MCF 10A (cell line): ENCODE measurements at regions of chr4 and their contacts with region 1.

Region 1: DNA sequence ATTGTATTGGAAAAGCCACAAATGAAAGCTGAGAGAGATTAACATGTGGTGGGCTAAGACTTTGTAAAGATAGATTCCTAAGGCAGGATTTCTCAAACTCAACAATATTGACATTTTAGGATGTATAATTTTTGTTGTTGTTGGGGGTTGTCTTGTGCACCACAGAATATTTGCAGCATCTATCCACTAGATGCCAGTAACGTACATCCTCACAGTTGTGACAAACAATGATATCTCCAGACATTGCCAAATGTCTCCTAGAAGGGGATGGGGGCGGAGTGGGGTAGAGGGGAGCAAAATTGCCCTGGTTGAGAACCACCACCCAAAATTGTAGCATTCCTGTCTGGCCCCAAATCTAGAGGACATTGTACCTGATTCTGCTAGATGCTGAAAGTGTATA is 14.7 kb upstream of the CBR4 start:
- DNase-seq: peak; percentile 51
- H3K4me3 Mint-ChIP-seq: no peak overlapping the region
- H3K27ac Mint-ChIP-seq: no peak overlapping the region
- H3K4me1 Mint-ChIP-seq: no peaks in the 10 kb centered on the region
- H3K27me3 Mint-ChIP-seq: no peaks in the 10 kb centered on the region
- CTCF ChIP-seq: peak; percentile 68

Region 2: DNA sequence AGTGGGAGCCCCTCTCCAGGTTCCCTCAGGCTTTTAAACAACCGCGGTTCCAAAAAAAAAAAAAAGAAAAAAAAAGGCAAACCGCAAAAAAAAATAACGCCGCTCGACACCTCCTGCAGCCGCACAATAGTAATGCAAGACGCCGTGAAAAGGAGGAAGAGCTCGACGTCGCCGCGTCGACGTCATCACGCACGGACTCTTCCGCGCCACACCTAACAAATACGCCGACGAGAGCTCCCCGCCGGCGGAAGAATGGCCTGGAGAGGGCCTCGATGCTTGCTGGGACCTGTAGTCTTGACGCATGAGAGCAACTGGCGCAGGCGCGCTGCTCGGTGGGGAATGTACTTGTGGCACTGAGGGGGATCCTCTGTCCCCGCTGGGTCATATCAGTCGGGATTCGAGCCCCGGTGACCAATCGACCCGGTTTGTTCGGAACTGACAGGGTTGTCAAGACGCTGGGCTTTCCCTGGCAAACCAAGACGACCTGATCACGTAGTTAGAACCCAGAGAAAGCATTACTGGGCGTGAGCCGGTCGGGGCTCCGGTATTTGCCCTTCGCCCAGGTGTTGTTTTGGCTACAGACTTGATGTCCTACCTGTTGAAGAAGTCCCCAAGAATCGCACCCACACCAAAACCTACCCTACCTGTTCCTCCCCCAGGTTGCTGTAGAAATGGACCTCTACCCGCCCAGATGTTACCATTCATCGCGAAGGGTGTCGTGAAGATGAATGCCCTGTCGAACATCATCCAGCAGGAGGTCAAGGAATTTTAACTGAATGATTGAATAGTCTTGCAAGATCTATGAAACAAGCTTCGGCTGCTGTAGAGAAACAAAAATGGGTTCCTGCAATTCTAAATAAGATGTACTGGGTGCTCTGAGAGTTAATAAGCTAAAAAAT is 14.4 kb before region 1 on chr4 and contains the start of gene CBR4:
- CTCF ChIA-PET with region 1: interaction called, 25 read pairs
- POLR2A ChIA-PET with region 1: interaction called, 7 read pairs
- intact Hi-C with region 1: no loop called
- DNase-seq: peak; percentile 98
- H3K4me3 Mint-ChIP-seq: peak within 1 kb of the TSS; percentile 94
- H3K27ac Mint-ChIP-seq: peak within 1 kb of the TSS; percentile 97
- H3K4me1 Mint-ChIP-seq: peaks cover 30% of the 10 kb centered on the region
- H3K27me3 Mint-ChIP-seq: no peaks in the 10 kb centered on the region
- CTCF ChIP-seq: peak; percentile 34
- total RNA-seq, gene CBR4: 19.2 and 24.0 TPM in 2 replicates

Region 3: GRCh38 chr4:169069972-169070902 is 45.5 kb after region 1 on chr4:
- CTCF ChIA-PET with region 1: interaction called, 11 read pairs
- POLR2A ChIA-PET with region 1: no interaction called
- intact Hi-C with region 1: no loop called
- DNase-seq: peak; percentile 82
- H3K4me3 Mint-ChIP-seq: peak overlapping the region; percentile 28
- H3K27ac Mint-ChIP-seq: peak overlapping the region; percentile 96
- H3K4me1 Mint-ChIP-seq: peaks cover 17% of the 10 kb centered on the region
- H3K27me3 Mint-ChIP-seq: no peaks in the 10 kb centered on the region
- CTCF ChIP-seq: no peak

Region 4: GRCh38 chr4:169115897-169116254 is 91.1 kb after region 1 on chr4:
- CTCF ChIA-PET with region 1: interaction called, 3 read pairs
- POLR2A ChIA-PET with region 1: no interaction called
- intact Hi-C with region 1: loop called (anchors 10 kb)
- DNase-seq: peak; percentile 87
- H3K4me3 Mint-ChIP-seq: peak overlapping the region; percentile 46
- H3K27ac Mint-ChIP-seq: peak overlapping the region; percentile 77
- H3K4me1 Mint-ChIP-seq: peaks cover 10% of the 10 kb centered on the region
- H3K27me3 Mint-ChIP-seq: no peaks in the 10 kb centered on the region
- CTCF ChIP-seq: no peak

Region 5: DNA sequence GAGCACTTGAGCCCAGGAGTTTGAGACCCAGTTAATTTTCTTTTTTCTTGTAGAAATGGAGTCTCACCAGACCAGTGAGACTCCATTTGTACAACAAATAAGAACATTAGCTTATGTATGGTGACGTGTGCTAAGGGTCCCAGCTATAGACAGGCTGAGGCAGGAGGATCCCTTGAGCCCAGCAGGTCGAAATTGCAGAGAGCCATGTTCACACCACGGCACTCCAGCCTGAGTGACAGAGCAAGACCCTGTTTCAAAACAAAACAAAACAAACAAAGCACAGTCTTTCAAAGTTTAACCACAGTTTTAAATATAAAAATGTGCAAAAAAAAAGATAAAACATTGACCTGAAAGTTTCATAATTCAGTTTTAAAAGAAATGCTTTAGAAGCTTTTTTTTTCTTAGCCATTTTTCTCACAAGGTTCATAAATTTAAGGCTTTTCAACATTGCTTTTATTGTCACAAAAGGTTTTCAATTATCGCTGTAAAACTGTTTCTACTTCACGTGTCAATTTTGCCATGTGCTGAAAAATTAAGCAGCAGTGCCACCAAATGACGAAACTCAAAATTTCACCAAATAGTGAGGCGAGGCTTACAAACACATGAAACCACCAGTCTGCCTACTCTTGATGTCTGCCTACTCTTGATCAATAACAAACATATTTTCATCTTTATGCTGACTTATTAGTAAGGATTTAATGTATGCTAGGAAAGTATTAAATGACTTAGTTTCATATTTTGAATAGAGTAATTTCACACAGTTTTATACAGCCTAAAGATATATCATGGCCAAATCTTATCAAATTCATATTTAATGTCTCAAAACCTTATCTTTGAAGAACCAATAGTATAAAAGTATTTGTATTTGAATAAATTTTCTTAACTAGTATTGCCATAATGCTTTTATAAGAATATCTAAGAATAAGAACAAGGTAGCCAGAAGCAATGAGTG is 461.3 kb after region 1 on chr4:
- CTCF ChIA-PET with region 1: interaction called, 32 read pairs
- POLR2A ChIA-PET with region 1: no interaction called
- intact Hi-C with region 1: loop called (anchors 1 kb)
- DNase-seq: peak; percentile 66
- H3K4me3 Mint-ChIP-seq: no peak overlapping the region
- H3K27ac Mint-ChIP-seq: peak overlapping the region; percentile 15
- H3K4me1 Mint-ChIP-seq: no peaks in the 10 kb centered on the region
- H3K27me3 Mint-ChIP-seq: no peaks in the 10 kb centered on the region
- CTCF ChIP-seq: peak; percentile 51

Region 6: DNA sequence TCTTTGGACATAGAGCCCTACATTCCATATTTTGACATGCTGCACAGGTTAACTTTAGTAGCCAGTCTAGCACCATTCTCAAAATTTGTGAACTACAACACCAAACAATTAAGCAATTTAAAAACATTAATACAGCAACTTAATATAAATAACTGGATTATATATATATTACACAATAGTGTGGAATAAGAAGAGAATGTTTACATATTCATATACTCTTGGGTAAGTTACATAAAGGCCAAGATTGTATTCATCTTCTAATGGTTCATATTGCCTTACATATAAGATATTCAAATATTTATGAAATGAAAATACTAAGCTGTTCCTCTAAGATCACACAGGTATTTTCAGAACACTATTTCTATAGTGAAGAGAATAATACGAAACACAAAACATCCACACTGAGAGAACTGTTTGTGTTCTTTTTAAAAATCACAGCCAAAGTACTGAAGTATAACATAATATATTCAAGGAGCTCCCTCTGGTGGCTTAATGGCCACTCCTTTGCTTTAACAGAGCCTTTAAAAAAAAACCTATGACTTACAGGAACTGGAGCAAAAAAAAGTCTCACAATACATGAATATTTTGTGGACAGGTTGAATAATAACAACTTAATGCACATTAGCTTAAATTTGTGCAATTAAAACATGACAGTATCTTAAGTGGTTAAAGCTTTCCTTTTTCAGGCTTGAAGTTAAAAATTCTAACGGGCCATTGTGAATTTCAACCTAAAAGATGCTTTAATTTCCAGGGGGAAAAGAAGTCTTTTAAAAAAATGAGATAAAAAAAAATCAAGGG is 541.5 kb after region 1 on chr4:
- CTCF ChIA-PET with region 1: interaction called, 3 read pairs
- POLR2A ChIA-PET with region 1: no interaction called
- intact Hi-C with region 1: loop called (anchors 1 kb)
- DNase-seq: peak; percentile 58
- H3K4me3 Mint-ChIP-seq: no peak overlapping the region
- H3K27ac Mint-ChIP-seq: no peak overlapping the region
- H3K4me1 Mint-ChIP-seq: peaks cover 5% of the 10 kb centered on the region
- H3K27me3 Mint-ChIP-seq: no peaks in the 10 kb centered on the region
- CTCF ChIP-seq: peak; percentile 38

Region 7: DNA sequence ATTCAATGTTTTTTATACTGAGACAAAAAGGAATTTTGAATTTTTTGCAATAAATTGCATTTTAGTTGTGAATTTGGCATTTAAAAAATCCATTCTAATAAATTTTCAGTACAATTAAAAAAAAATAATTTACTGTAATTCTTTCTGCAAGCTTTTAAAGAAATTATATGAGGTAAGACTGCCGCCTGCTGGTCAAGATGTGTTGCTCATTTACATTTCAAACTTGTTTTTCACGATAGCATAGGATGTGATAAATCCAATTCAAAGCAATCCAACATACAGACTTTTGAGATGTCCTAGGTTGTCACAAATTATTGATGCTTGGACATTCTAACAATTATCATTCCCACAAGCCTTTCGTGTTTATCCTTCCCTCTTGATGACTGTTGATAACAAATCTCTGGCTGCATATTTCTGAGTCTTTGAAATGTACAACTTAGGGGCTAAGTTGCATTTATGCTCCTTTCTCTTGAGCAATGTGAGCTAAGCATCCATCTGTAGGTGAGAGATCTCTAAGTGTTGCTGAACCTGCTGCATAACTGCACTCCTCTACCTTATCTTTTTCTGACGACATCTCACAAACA is 1023.1 kb after region 1 on chr4:
- CTCF ChIA-PET with region 1: no interaction called
- POLR2A ChIA-PET with region 1: no interaction called
- intact Hi-C with region 1: loop called (anchors 5 kb)
- DNase-seq: peak; percentile 62
- H3K4me3 Mint-ChIP-seq: no peak overlapping the region
- H3K27ac Mint-ChIP-seq: no peak overlapping the region
- H3K4me1 Mint-ChIP-seq: no peaks in the 10 kb centered on the region
- H3K27me3 Mint-ChIP-seq: no peaks in the 10 kb centered on the region
- CTCF ChIP-seq: peak; percentile 69